ENCODE measurements at regions of chr2 and their contacts with region 1.

Region 1: GRCh38 chr2:172131713-172132555 is 29.2 kb upstream of the DLX2 start:
- DNase-seq: no peak
- ATAC-seq: no peak
- H3K4me3 Mint-ChIP-seq: no peak overlapping the region
- H3K27ac Mint-ChIP-seq: no peak overlapping the region
- H3K4me1 Mint-ChIP-seq: no peaks in the 10 kb centered on the region
- H3K27me3 Mint-ChIP-seq: peaks cover 18% of the 10 kb centered on the region

Region 2: DNA sequence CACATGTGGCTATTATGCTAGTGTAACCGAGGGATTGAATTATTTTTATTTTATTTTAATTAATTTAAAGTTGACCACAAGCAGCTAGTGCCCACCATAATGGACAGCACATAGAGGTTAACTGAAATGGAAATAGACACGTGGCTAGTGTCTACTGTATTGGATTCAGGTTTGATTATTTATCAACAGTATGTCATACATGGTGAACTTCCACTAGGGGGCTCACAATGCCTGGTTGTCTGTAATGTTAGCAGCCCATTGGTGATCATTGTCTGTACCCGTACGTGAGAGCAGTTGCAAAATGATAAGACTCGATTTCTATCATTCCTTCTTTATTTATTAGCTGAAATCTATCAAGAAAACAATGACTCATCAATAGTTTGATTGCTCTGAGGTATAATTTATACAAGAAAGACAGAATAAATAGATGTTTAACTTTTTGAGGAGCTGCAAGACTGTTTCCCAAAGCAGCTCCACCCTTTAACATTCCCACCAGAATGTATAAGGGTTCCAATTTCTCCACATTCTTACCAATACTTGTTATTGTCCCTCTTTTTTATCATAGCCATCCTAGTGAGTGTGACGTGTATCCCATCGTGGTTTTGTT is 533.1 kb before region 1 on chr2:
- CTCF ChIA-PET with region 1: interaction called, 12 read pairs
- POLR2A ChIA-PET with region 1: no interaction called
- DNase-seq: peak; percentile 68
- ATAC-seq: peak; percentile 100
- H3K4me3 Mint-ChIP-seq: no peak overlapping the region
- H3K27ac Mint-ChIP-seq: no peak overlapping the region
- H3K4me1 Mint-ChIP-seq: no peaks in the 10 kb centered on the region
- H3K27me3 Mint-ChIP-seq: peaks cover 11% of the 10 kb centered on the region

Region 3: GRCh38 chr2:172113617-172114016 is 18.3 kb before region 1 on chr2:
- CTCF ChIA-PET with region 1: interaction called, 25 read pairs
- POLR2A ChIA-PET with region 1: no interaction called
- DNase-seq: no peak
- ATAC-seq: no peak
- H3K4me3 Mint-ChIP-seq: no peak overlapping the region
- H3K27ac Mint-ChIP-seq: no peak overlapping the region
- H3K4me1 Mint-ChIP-seq: no peaks in the 10 kb centered on the region
- H3K27me3 Mint-ChIP-seq: peaks cover 37% of the 10 kb centered on the region

Measured in activated CD8-positive, alpha-beta T cell treated with anti-CD3 and anti-CD28 coated beads, Interleukin-2, amount 10 ng/mL, durations not matched to agents 7 days and 5 days (primary cell).